Activated CD4-positive, alpha-beta T cell treated with anti-CD3 and anti-CD28 coated beads for 36 hours (primary cell): ENCODE measurements at regions of chr9 and their contacts with region 1.

Region 1: GRCh38 chr9:613771-614347 is 227.6 kb upstream of the DMRT1 start:
- DNase-seq: peak; percentile 77
- ATAC-seq: peak; percentile 98
- H3K4me3 Mint-ChIP-seq: no peak overlapping the region
- H3K27ac Mint-ChIP-seq: no peak overlapping the region
- H3K4me1 Mint-ChIP-seq: peaks cover 4% of the 10 kb centered on the region
- H3K27me3 Mint-ChIP-seq: no peaks in the 10 kb centered on the region

Region 2: GRCh38 chr9:655875-656274 is 42.0 kb after region 1 on chr9:
- CTCF ChIA-PET with region 1: no interaction called
- POLR2A ChIA-PET with region 1: no interaction called
- intact Hi-C with region 1: loop called (anchors 2 to 5 kb)
- DNase-seq: no peak
- ATAC-seq: no peak
- H3K4me3 Mint-ChIP-seq: no peak overlapping the region
- H3K27ac Mint-ChIP-seq: no peak overlapping the region
- H3K4me1 Mint-ChIP-seq: peaks cover 6% of the 10 kb centered on the region
- H3K27me3 Mint-ChIP-seq: no peaks in the 10 kb centered on the region

Region 3: GRCh38 chr9:757246-757881 is 143.5 kb after region 1 on chr9:
- CTCF ChIA-PET with region 1: interaction called, 4 read pairs
- POLR2A ChIA-PET with region 1: no interaction called
- intact Hi-C with region 1: loop called in 1 of 2 experiments (anchors 2 kb)
- DNase-seq: peak; percentile 21
- ATAC-seq: peak; percentile 30
- H3K4me3 Mint-ChIP-seq: no peak overlapping the region
- H3K27ac Mint-ChIP-seq: no peak overlapping the region
- H3K4me1 Mint-ChIP-seq: peaks cover 7% of the 10 kb centered on the region
- H3K27me3 Mint-ChIP-seq: peaks cover 4% of the 10 kb centered on the region

Region 4: DNA sequence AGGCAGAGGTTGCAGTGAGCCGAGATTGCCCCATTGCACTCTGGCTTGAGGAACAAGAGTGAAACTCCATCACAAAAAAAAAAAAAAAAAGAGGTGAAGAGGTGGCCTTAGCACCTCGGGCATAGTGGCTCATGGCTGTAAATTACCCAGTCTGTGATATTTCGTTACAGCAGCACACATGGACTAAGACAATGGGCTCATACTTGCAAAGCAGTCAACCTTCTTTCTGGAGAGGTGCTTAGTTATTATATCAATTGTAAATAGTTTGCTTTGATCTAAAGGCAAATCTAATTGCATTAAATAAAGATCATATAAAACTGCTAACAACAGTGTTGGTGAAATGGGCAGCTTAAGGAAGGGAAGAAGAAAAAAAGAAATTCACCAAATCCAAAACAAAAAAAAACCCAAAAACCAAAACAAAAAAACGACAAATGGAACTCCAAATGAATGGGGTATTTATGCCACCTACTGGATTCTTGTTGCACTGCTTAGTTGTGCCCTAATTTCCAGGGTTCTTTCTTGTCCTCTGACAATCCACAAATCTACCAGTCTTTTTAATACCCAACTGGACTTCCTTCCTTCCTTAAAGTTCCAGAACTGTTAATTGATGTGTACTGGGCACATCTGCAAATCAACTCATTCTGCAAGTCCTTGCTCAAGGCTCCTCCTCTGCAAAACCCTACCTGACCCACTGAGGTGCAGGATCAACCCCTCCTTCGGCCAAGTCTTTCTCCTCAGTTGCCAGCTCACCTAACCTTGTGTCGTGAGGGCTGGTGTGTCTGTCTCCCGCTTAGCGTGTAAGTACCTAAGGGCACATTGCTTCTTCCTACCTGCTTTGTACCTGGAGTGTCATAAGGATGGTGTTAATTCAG is 192.7 kb after region 1 on chr9:
- CTCF ChIA-PET with region 1: interaction called, 8 read pairs
- POLR2A ChIA-PET with region 1: no interaction called
- intact Hi-C with region 1: loop called (anchors 1 kb)
- DNase-seq: peak; percentile 9
- ATAC-seq: no peak
- H3K4me3 Mint-ChIP-seq: no peak overlapping the region
- H3K27ac Mint-ChIP-seq: no peak overlapping the region
- H3K4me1 Mint-ChIP-seq: no peaks in the 10 kb centered on the region
- H3K27me3 Mint-ChIP-seq: peaks cover 3% of the 10 kb centered on the region

Region 5: GRCh38 chr9:911003-911402 is 297.1 kb after region 1 on chr9:
- CTCF ChIA-PET with region 1: no interaction called
- POLR2A ChIA-PET with region 1: no interaction called
- intact Hi-C with region 1: no loop called
- DNase-seq: no peak
- ATAC-seq: no peak
- H3K4me3 Mint-ChIP-seq: no peak overlapping the region
- H3K27ac Mint-ChIP-seq: no peak overlapping the region
- H3K4me1 Mint-ChIP-seq: no peaks in the 10 kb centered on the region
- H3K27me3 Mint-ChIP-seq: peaks cover 42% of the 10 kb centered on the region

Region 6: GRCh38 chr9:994005-994404 is 380.1 kb after region 1 on chr9:
- CTCF ChIA-PET with region 1: no interaction called
- POLR2A ChIA-PET with region 1: no interaction called
- intact Hi-C with region 1: loop called in 1 of 2 experiments (anchors 2 kb)
- DNase-seq: no peak
- ATAC-seq: peak; percentile 33
- H3K4me3 Mint-ChIP-seq: no peak overlapping the region
- H3K27ac Mint-ChIP-seq: no peak overlapping the region
- H3K4me1 Mint-ChIP-seq: peaks cover 2% of the 10 kb centered on the region
- H3K27me3 Mint-ChIP-seq: peaks cover 11% of the 10 kb centered on the region

Region 7: GRCh38 chr9:1009101-1009707 is 395.3 kb after region 1 on chr9:
- CTCF ChIA-PET with region 1: interaction called, 4 read pairs
- POLR2A ChIA-PET with region 1: no interaction called
- intact Hi-C with region 1: loop called (anchors 2 to 5 kb)
- DNase-seq: peak; percentile 85
- ATAC-seq: peak; percentile 98
- H3K4me3 Mint-ChIP-seq: no peak overlapping the region
- H3K27ac Mint-ChIP-seq: no peak overlapping the region
- H3K4me1 Mint-ChIP-seq: peaks cover 2% of the 10 kb centered on the region
- H3K27me3 Mint-ChIP-seq: peaks cover 36% of the 10 kb centered on the region